Left ventricle myocardium inferior (tissue), 1 donor: ENCODE measurements at regions of chr3 and their contacts with region 1.

Region 1: DNA sequence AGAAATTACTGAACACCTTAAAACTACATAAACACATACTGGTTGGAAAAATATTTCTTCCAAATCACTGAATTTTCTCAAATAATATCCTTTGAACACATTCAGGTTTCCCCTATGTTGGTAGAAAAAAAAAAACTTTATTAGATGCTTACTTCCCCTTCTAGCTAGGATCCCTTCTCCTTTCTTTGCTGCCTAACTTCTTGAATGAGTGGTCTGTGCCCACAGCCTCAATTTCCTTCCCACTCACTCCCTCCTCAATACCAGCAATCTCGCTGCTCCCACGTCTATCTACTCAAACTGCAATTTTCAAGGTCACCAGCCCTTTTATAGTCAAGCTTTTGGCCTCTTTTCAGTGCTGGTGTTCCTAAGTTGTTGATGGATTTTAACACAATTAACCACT is 8.3 kb downstream of the CD200R1 start:
- DNase-seq: no peak
- H3K4me3 ChIP-seq: no peak overlapping the region
- H3K27ac ChIP-seq: no peak overlapping the region
- H3K4me1 ChIP-seq: no peaks in the 10 kb centered on the region
- H3K27me3 ChIP-seq: peaks cover 49% of the 10 kb centered on the region
- CTCF ChIP-seq: no peak

Region 2: DNA sequence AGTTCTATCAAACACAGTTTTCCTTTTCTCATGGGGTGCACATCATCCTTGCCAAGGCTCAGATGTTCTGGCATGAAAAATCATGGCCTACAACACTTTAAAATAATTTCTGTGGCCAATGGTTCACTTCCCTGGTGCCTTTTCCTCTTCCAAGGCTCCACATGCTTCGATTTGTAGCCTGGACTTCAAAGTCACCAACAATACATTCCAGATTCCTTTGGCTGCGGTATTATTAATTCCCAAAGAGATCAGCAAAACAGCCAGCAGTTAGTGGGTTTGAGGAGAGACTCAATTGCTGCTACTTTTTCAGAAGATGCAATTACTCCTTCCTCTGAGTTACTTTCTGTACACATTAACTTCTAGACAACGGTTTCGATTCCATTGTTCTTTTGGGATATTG is 245.4 kb before region 1 on chr3:
- intact Hi-C with region 1: loop called (anchors 5 kb)
- DNase-seq: no peak
- H3K4me3 ChIP-seq: no peak overlapping the region
- H3K27ac ChIP-seq: no peak overlapping the region
- H3K4me1 ChIP-seq: no peaks in the 10 kb centered on the region
- H3K27me3 ChIP-seq: no peaks in the 10 kb centered on the region
- CTCF ChIP-seq: no peak

Region 3: GRCh38 chr3:112799946-112800345 is 166.7 kb before region 1 on chr3:
- intact Hi-C with region 1: no loop called
- DNase-seq: no peak
- H3K4me3 ChIP-seq: no peak overlapping the region
- H3K27ac ChIP-seq: no peak overlapping the region
- H3K4me1 ChIP-seq: no peaks in the 10 kb centered on the region
- H3K27me3 ChIP-seq: no peaks in the 10 kb centered on the region
- CTCF ChIP-seq: no peak

Region 4: GRCh38 chr3:114260152-114260551 is 1293.5 kb after region 1 on chr3:
- intact Hi-C with region 1: no loop called
- DNase-seq: no peak
- H3K4me3 ChIP-seq: no peak overlapping the region
- H3K27ac ChIP-seq: no peak overlapping the region
- H3K4me1 ChIP-seq: no peaks in the 10 kb centered on the region
- H3K27me3 ChIP-seq: no peaks in the 10 kb centered on the region
- CTCF ChIP-seq: no peak